ENCODE measurements at regions of chr7 and their contacts with region 1.

Region 1: DNA sequence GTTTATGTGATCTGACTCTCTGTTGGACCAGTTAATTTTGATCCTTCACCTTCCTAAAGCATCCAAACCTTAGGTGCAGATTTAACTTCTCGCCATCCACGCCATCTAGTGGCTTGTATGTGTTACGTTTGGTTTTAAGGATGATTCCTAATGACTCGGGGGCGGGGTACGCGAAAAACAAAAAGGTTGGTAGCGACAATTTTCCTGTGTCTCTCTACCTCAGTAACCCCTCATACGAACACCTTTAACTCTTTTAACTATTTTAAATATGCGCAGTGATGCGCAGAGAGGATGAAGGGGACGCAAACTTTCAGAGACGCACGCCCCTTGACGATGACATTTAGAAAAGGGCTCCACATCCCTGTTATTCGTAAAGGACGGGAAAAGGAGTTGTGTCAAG is 714 bp upstream of the KCND2 start:
- DNase-seq: no peak
- ATAC-seq: peak; percentile 41 to 87 (median 80)
- H3K4me3 ChIP-seq: peak overlapping the region; percentile 24 to 51 (median 28)
- H3K27ac ChIP-seq: no peak overlapping the region
- H3K4me1 ChIP-seq: no peaks in the 10 kb centered on the region
- H3K27me3 ChIP-seq: no peaks in the 10 kb centered on the region
- CTCF ChIP-seq: peak in 3 of 4 donors; percentile 35 to 53 (median 40)

Region 2: GRCh38 chr7:119935418-119936025 is 336.7 kb before region 1 on chr7:
- intact Hi-C with region 1: loop called in 1 of 3 experiments (anchors 10 kb)
- DNase-seq: no peak
- ATAC-seq: peak in 1 of 4 donors; percentile 58
- H3K4me3 ChIP-seq: no peak overlapping the region
- H3K27ac ChIP-seq: no peak overlapping the region
- H3K4me1 ChIP-seq: no peaks in the 10 kb centered on the region
- H3K27me3 ChIP-seq: no peaks in the 10 kb centered on the region
- CTCF ChIP-seq: peak in 2 of 4 donors; percentile 36 to 52

Measured in pancreas (tissue), 10 donors.